ENCODE measurements at regions of chr6 and their contacts with region 1.

Region 1: DNA sequence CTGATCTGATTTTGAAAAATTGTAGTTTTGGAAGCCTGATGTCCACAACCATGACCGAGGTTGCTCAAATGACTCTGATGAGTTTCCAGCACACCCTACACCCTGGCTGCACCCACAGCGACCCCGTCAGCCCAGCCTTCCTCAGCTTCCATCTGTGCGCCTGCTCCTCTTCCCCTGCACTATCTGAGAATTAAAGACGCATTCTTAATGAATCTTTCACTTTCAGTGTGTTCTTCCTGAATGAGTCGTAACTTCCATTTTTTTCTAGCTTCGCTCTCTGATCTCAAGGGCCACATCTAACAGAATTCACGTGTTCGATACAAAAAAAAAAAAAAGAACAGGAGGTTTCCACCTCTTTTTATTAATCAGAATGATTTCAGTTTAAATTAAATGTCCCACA is 21.3 kb upstream of the RREB1 start:
- DNase-seq: peak; percentile 35
- ATAC-seq: peak; percentile 87
- H3K4me3 Mint-ChIP-seq: peak overlapping the region; percentile 83
- H3K27ac Mint-ChIP-seq: peak overlapping the region; percentile 89
- H3K4me1 Mint-ChIP-seq: peaks cover 30% of the 10 kb centered on the region
- H3K27me3 Mint-ChIP-seq: no peaks in the 10 kb centered on the region
- CTCF ChIP-seq: no peak

Region 2: GRCh38 chr6:6438286-6438685 is 648.2 kb before region 1 on chr6:
- CTCF ChIA-PET with region 1: no interaction called
- POLR2A ChIA-PET with region 1: no interaction called
- intact Hi-C with region 1: no loop called
- DNase-seq: no peak
- ATAC-seq: no peak
- H3K4me3 Mint-ChIP-seq: no peak overlapping the region
- H3K27ac Mint-ChIP-seq: no peak overlapping the region
- H3K4me1 Mint-ChIP-seq: no peaks in the 10 kb centered on the region
- H3K27me3 Mint-ChIP-seq: no peaks in the 10 kb centered on the region
- CTCF ChIP-seq: no peak

Region 3: DNA sequence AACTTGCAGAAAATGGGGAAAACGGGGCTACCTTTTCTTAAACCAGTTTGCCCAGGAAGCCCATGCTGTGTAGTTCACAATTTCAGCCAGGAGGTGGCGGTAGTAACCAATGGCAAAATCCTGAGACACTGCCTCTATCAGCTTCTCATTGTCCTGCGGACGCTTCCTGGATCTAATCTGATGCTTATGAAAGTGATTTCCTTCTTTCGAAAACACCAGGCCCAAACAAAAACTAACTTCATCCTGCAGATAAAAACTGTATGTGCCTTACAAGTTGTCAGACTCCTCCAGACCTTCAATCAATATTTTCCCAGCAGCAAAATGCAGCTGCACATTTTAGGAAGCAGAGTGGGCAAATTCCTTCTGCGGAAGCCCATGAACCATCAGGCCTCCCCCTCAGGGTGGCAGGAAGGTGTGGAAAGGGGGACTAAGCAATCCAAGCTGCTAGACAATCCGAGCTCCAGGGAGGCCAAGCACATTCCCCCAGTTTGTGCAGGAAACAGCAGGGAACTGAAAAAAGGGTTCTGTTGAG is 409.5 kb before region 1 on chr6:
- CTCF ChIA-PET with region 1: interaction called, 3 read pairs
- POLR2A ChIA-PET with region 1: no interaction called
- intact Hi-C with region 1: loop called (anchors 5 kb)
- DNase-seq: peak; percentile 65
- ATAC-seq: peak; percentile 94
- H3K4me3 Mint-ChIP-seq: no peak overlapping the region
- H3K27ac Mint-ChIP-seq: no peak overlapping the region
- H3K4me1 Mint-ChIP-seq: peaks cover 8% of the 10 kb centered on the region
- H3K27me3 Mint-ChIP-seq: peaks cover 6% of the 10 kb centered on the region
- CTCF ChIP-seq: peak; percentile 95

Region 4: GRCh38 chr6:6788394-6789020 is 298.0 kb before region 1 on chr6:
- CTCF ChIA-PET with region 1: interaction called, 4 read pairs
- POLR2A ChIA-PET with region 1: no interaction called
- intact Hi-C with region 1: loop called (anchors 1 kb)
- DNase-seq: no peak
- ATAC-seq: peak; percentile 90
- H3K4me3 Mint-ChIP-seq: no peak overlapping the region
- H3K27ac Mint-ChIP-seq: no peak overlapping the region
- H3K4me1 Mint-ChIP-seq: no peaks in the 10 kb centered on the region
- H3K27me3 Mint-ChIP-seq: no peaks in the 10 kb centered on the region
- CTCF ChIP-seq: no peak

Region 5: GRCh38 chr6:6981681-6982327 is 104.7 kb before region 1 on chr6:
- CTCF ChIA-PET with region 1: no interaction called
- POLR2A ChIA-PET with region 1: no interaction called
- intact Hi-C with region 1: no loop called
- DNase-seq: no peak
- ATAC-seq: no peak
- H3K4me3 Mint-ChIP-seq: no peak overlapping the region
- H3K27ac Mint-ChIP-seq: no peak overlapping the region
- H3K4me1 Mint-ChIP-seq: no peaks in the 10 kb centered on the region
- H3K27me3 Mint-ChIP-seq: no peaks in the 10 kb centered on the region
- CTCF ChIP-seq: no peak

Region 6: GRCh38 chr6:7051233-7052114 is 35.0 kb before region 1 on chr6:
- CTCF ChIA-PET with region 1: no interaction called
- POLR2A ChIA-PET with region 1: interaction called, 21 read pairs
- intact Hi-C with region 1: loop called (anchors 5 kb)
- DNase-seq: peak; percentile 61
- ATAC-seq: peak; percentile 86
- H3K4me3 Mint-ChIP-seq: peak overlapping the region; percentile 76
- H3K27ac Mint-ChIP-seq: peak overlapping the region; percentile 56
- H3K4me1 Mint-ChIP-seq: peaks cover 38% of the 10 kb centered on the region
- H3K27me3 Mint-ChIP-seq: no peaks in the 10 kb centered on the region
- CTCF ChIP-seq: no peak

Region 7: DNA sequence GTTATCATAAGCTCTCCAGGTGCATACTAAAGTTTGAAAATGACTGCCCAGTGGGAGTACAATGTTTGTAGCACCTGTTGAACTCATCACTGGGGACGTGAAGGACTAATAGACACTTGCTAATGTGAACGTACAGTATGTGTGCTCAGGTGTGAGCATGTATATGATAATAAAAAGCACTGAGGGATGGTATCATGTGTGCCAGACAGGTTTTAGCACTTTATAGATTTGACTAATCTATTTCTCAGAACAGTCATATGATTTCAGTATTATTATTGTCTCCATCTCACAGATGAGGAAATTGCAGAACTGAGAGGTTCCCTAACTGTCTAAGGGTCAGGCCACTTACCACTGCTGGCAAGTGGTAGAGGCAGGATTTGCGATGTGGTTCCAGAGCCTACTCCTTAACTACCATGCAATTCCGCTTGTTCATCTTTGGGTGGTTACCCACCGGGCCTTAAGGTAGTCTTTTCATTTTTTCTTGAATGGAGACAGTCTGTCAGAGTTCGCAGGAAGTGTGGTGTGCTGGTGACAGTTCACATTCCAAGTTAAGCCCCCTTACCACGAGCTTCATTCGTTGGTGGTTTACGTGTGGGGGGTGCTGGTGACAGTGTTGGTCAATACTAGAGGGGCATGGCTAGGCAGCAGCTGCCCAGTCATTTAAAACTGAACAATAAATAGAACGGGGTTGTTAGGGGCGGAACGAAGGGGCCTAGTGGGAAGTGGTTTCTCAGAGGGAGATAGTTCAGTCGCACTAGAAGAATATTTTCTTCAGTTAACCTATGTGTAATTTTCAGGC is 68.1 kb after region 1 on chr6:
- CTCF ChIA-PET with region 1: interaction called, 6 read pairs
- POLR2A ChIA-PET with region 1: interaction called, 4 read pairs
- intact Hi-C with region 1: loop called (anchors 2 kb)
- DNase-seq: no peak
- ATAC-seq: peak; percentile 84
- H3K4me3 Mint-ChIP-seq: peak overlapping the region; percentile 74
- H3K27ac Mint-ChIP-seq: peak overlapping the region; percentile 92
- H3K4me1 Mint-ChIP-seq: peaks cover 89% of the 10 kb centered on the region
- H3K27me3 Mint-ChIP-seq: no peaks in the 10 kb centered on the region
- CTCF ChIP-seq: no peak

Region 8: GRCh38 chr6:7461416-7461815 is 374.9 kb after region 1 on chr6:
- CTCF ChIA-PET with region 1: no interaction called
- POLR2A ChIA-PET with region 1: no interaction called
- intact Hi-C with region 1: no loop called
- DNase-seq: no peak
- ATAC-seq: no peak
- H3K4me3 Mint-ChIP-seq: no peak overlapping the region
- H3K27ac Mint-ChIP-seq: no peak overlapping the region
- H3K4me1 Mint-ChIP-seq: no peaks in the 10 kb centered on the region
- H3K27me3 Mint-ChIP-seq: peaks cover 9% of the 10 kb centered on the region
- CTCF ChIP-seq: no peak